CD4-positive, alpha-beta memory T cell (primary cell): ENCODE measurements at regions of chr2 and their contacts with region 1.

Region 1: DNA sequence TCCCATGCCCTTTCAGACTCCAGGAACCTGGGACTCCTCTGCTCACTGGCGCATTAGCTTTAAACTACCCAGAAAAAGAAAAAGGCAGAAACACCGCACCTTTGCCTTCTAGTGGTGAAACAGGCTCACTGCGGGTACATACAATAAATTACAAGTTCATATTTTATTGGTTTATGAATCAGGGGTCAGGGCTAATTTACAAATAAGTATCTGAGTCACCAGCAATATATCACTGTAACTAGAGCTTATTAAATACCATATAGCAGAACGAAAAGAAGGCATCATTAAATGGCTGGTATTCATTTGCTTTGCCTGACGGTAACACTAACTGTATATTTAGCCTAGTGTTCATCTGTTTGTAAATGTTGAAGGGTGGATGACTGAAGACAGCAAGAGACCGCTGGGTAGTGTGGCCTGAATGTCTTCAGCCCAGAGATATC is 26.9 kb upstream of the DTNB start:
- DNase-seq: peak in 4 of 5 donors; percentile 20 to 42 (median 27)
- H3K4me3 ChIP-seq: no peak overlapping the region
- H3K4me3 Mint-ChIP-seq: no peak overlapping the region
- H3K27ac ChIP-seq: no peak overlapping the region
- H3K27ac Mint-ChIP-seq: no peak overlapping the region
- H3K4me1 ChIP-seq: no peaks in the 10 kb centered on the region
- H3K4me1 Mint-ChIP-seq: peaks cover 0 to 3% (median 0%) of the 10 kb centered on the region in 4 donors
- H3K27me3 ChIP-seq: no peaks in the 10 kb centered on the region
- H3K27me3 Mint-ChIP-seq: no peaks in the 10 kb centered on the region

Region 2: GRCh38 chr2:25623361-25623760 is 76.9 kb before region 1 on chr2:
- CTCF ChIA-PET with region 1: no interaction called
- POLR2A ChIA-PET with region 1: no interaction called
- intact Hi-C with region 1: no loop called
- DNase-seq: no peak
- H3K4me3 ChIP-seq: no peak overlapping the region
- H3K4me3 Mint-ChIP-seq: no peak overlapping the region
- H3K27ac ChIP-seq: no peak overlapping the region
- H3K27ac Mint-ChIP-seq: no peak overlapping the region
- H3K4me1 ChIP-seq: no peaks in the 10 kb centered on the region
- H3K4me1 Mint-ChIP-seq: no peaks in the 10 kb centered on the region
- H3K27me3 ChIP-seq: no peaks in the 10 kb centered on the region
- H3K27me3 Mint-ChIP-seq: no peaks in the 10 kb centered on the region

Region 3: DNA sequence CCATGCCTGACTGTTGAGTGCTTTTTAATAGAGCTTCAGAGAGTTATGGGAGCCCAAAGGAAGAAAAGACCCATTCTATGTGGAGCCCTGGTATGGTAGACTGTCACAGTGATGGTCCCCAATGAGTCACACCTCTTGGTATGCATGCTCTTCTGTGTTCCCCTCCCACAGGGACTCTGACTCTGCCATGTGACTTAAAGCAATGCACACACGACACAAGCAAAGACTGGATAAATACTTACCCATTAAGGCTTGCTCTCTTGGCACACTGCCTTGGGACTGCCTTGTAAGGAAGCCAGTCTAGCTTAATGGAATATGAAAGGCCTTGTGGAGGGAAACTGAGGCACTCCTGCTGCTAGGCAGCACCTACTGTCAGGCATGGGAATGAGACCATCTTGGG is 10.2 kb before region 1 on chr2:
- CTCF ChIA-PET with region 1: interaction called, 23 read pairs
- POLR2A ChIA-PET with region 1: no interaction called
- intact Hi-C with region 1: no loop called
- DNase-seq: no peak
- H3K4me3 ChIP-seq: no peak overlapping the region
- H3K4me3 Mint-ChIP-seq: no peak overlapping the region
- H3K27ac ChIP-seq: no peak overlapping the region
- H3K27ac Mint-ChIP-seq: no peak overlapping the region
- H3K4me1 ChIP-seq: no peaks in the 10 kb centered on the region
- H3K4me1 Mint-ChIP-seq: no peaks in the 10 kb centered on the region
- H3K27me3 ChIP-seq: no peaks in the 10 kb centered on the region
- H3K27me3 Mint-ChIP-seq: peaks cover 0 to 1% of the 10 kb centered on the region in 2 donors

Region 4: GRCh38 chr2:25714740-25715139 is 14.5 kb after region 1 on chr2:
- CTCF ChIA-PET with region 1: interaction called, 12 read pairs
- POLR2A ChIA-PET with region 1: no interaction called
- intact Hi-C with region 1: no loop called
- DNase-seq: no peak
- H3K4me3 ChIP-seq: no peak overlapping the region
- H3K4me3 Mint-ChIP-seq: peak overlapping the region in 1 of 8 donors; percentile 23
- H3K27ac ChIP-seq: no peak overlapping the region
- H3K27ac Mint-ChIP-seq: no peak overlapping the region
- H3K4me1 ChIP-seq: no peaks in the 10 kb centered on the region
- H3K4me1 Mint-ChIP-seq: peaks cover 2 to 16% (median 10%) of the 10 kb centered on the region in 4 donors
- H3K27me3 ChIP-seq: no peaks in the 10 kb centered on the region
- H3K27me3 Mint-ChIP-seq: peaks cover 3 to 9% of the 10 kb centered on the region in 2 donors